Naive thymus-derived CD4-positive, alpha-beta T cell (primary cell): ENCODE measurements at regions of chr1 and their contacts with region 1.

Region 1: DNA sequence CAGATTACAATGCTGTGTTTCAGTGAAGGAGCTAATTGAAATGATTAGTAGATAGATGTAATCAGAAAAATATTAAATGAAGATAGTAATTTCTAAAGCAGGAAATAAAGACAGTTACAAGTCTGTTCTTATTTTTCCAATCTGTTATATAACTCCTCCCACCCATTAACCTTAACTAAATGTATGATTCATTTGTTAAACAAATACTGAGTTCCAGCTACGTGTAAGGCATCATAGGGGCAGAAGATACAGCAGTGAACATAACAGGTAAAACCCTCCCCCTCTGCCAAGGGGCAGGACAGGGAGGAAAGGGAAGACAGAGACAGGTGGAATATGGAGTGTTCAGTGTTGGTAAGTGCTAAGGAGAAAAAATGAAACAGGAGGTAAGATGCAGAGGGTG is at the start of gene FAM177B:
- DNase-seq: no peak
- ATAC-seq: no peak
- H3K4me3 ChIP-seq: no peak within 1 kb of the TSS
- H3K4me3 Mint-ChIP-seq: no peak within 1 kb of the TSS
- H3K27ac ChIP-seq: no peak within 1 kb of the TSS
- H3K27ac Mint-ChIP-seq: no peak within 1 kb of the TSS
- H3K4me1 ChIP-seq: no peaks in the 10 kb centered on the region
- H3K4me1 Mint-ChIP-seq: peaks cover 0 to 7% (median 0%) of the 10 kb centered on the region in 7 donors
- H3K27me3 ChIP-seq: no peaks in the 10 kb centered on the region
- H3K27me3 Mint-ChIP-seq: no peaks in the 10 kb centered on the region
- total RNA-seq, gene FAM177B: not detected

Region 2: GRCh38 chr1:222754366-222755139 is 17.6 kb after region 1 on chr1:
- CTCF ChIA-PET with region 1: no interaction called
- POLR2A ChIA-PET with region 1: no interaction called
- intact Hi-C with region 1: no loop called
- DNase-seq: no peak
- ATAC-seq: peak; percentile 37
- H3K4me3 ChIP-seq: no peak overlapping the region
- H3K4me3 Mint-ChIP-seq: no peak overlapping the region
- H3K27ac ChIP-seq: no peak overlapping the region
- H3K27ac Mint-ChIP-seq: no peak overlapping the region
- H3K4me1 ChIP-seq: no peaks in the 10 kb centered on the region
- H3K4me1 Mint-ChIP-seq: no peaks in the 10 kb centered on the region
- H3K27me3 ChIP-seq: no peaks in the 10 kb centered on the region
- H3K27me3 Mint-ChIP-seq: peaks cover 0 to 10% (median 3%) of the 10 kb centered on the region in 5 donors

Region 3: DNA sequence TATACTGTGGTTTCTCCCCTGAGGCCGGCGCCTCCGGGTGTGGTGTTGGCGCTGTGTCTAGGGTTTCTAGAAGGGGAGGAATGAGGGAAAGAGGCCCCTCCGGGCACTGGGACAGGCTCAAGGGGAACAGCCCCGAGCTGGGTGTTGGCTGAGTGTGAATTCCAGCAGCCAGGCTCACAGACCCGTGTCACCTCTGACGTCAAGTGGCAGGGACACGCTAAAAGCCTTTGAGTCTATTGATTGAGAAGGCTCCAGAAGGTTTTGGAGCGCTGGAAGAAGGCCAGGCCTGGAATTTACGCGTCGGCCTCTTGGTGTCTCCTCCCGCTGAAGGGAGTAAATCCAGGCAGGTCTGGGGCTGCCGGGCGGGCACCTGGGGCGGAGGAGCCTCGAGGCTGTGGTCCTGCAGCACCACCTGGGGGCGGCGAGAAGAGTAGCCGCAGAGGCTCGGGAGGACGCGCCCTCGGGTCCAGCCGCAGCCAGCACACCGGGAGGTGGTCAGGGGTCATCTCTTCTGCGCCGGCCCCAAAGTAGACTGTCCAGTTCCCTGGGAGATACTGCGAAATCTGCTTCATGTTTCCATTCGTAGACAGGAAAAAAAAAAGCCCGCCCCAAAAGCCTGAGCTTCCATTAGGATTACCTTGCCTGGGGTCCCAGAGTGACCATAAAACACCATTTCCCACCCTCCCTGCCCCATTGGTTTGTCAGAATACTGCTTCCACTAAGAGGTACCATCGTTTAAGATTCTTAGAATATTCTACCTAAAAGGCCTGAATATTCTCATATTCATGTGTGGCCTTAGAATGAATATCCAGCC is 344.4 kb after region 1 on chr1:
- CTCF ChIA-PET with region 1: interaction called, 4 read pairs
- POLR2A ChIA-PET with region 1: no interaction called
- intact Hi-C with region 1: loop called in 1 of 2 experiments (anchors 1 kb)
- DNase-seq: peak; percentile 54 to 79 (median 65)
- ATAC-seq: peak; percentile 90
- H3K4me3 ChIP-seq: peak overlapping the region; percentile 57
- H3K4me3 Mint-ChIP-seq: peak overlapping the region; percentile 34 to 77 (median 58)
- H3K27ac ChIP-seq: peak overlapping the region; percentile 39
- H3K27ac Mint-ChIP-seq: peak overlapping the region in 1 of 9 donors; percentile 51
- H3K4me1 ChIP-seq: no peaks in the 10 kb centered on the region
- H3K4me1 Mint-ChIP-seq: no peaks in the 10 kb centered on the region
- H3K27me3 ChIP-seq: no peaks in the 10 kb centered on the region
- H3K27me3 Mint-ChIP-seq: peaks cover 2 to 9% (median 4%) of the 10 kb centered on the region in 5 donors